ENCODE measurements at regions of chr1 and their contacts with region 1.

Region 1: DNA sequence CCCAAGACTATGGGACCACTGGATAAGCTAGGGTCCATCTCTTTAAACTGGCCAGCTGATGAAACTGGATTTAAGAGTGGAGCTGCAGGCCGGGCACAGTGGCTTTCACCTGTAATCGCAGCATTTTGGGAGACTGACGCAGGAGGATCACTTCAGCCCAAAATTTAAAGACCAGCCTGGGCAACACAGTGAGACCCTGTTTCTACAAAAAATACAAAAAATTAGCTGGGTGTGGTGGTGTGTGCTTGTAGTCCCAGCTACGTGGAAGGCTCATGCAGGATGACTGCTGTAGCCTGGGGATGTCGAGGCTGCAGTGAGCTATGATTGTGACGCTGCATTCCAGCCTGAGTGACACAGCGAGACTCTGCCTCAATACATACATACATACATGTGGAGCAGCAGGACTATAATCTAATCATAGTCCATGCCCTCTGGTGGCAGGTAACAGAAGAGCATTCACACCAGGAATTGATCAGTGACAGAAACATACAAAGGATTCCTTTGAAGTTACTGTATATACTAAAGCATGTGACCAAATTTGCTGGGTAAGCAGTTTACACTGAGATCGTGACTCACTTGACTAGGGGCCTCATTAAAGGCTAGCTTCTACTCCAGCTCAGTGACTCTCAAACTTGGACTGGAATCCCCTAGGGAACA is 101.5 kb upstream of the SLFNL1 start:
- DNase-seq: peak; percentile 72
- H3K4me3 ChIP-seq: no peak overlapping the region
- CTCF ChIP-seq: peak; percentile 63

Region 2: DNA sequence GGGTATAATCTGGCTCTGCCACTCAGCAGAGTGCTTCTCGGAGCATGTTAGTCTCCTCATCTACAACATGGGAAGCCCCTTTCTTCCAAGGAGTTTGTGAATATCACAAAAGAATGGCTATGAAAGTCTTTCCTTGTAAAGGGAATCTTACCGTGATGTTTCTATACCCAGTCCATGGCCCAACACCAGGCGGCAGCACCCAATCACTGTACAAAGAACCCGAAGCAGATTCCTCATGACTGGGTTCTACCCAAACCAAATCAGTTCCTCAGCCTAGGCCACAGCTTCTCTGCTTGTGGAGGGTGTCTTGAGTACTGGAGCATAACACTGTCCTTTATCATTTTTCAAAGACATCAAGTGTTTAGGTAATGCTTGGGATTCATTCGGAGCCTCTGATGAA is 84.9 kb before region 1 on chr1:
- CTCF ChIA-PET with region 1: interaction called, 10 read pairs
- POLR2A ChIA-PET with region 1: no interaction called
- DNase-seq: no peak
- H3K4me3 ChIP-seq: no peak overlapping the region
- CTCF ChIP-seq: no peak

Region 3: GRCh38 chr1:41103766-41104165 is 19.2 kb before region 1 on chr1:
- CTCF ChIA-PET with region 1: interaction called, 34 read pairs
- POLR2A ChIA-PET with region 1: interaction called, 3 read pairs
- DNase-seq: no peak
- H3K4me3 ChIP-seq: no peak overlapping the region
- CTCF ChIP-seq: no peak

Region 4: DNA sequence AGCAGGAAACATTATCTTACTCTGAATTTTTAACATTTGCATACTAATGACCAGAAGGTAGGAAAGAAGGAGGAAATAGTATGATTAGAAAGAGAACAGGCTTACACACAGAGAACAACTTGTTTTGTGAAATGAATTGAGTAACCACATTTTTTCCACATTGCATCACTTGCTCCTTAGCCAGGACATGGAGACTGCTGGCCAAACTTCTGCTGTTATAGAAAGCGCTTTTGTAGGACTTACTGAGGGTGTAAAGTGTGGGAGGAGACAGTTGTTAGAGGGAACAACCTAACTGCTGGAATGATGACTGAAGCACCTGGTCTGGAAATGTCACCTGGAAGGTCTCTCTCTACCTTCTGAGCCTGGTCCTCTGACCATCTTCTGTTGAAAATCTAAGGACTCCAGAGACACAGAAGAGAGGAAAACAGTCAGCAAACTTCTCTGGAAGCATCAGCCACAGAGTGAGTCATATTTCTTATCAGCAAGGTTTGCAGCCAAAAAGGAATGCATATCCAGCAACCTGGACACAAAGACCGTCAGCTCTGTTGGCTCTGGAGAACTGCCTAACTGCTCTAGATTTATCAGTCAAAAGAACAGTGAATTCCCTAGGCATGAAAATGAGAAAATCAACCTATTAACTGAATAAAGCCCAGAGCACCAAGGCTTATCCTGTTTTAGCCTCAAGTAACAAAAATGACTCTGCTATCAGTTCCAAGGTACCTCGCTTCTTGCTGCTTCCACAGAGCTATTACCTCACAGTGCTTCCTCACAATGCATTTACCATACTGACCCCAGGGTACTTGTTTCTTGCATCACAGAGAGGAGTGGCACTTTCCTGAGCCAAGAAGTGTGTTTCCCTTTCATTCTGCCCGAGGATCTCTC is 13.4 kb before region 1 on chr1:
- CTCF ChIA-PET with region 1: interaction called, 34 read pairs
- POLR2A ChIA-PET with region 1: interaction called, 3 read pairs
- DNase-seq: peak; percentile 67
- H3K4me3 ChIP-seq: peak overlapping the region; percentile 28; the same call in 1 of the 2 replicates
- CTCF ChIP-seq: no peak

Region 5: DNA sequence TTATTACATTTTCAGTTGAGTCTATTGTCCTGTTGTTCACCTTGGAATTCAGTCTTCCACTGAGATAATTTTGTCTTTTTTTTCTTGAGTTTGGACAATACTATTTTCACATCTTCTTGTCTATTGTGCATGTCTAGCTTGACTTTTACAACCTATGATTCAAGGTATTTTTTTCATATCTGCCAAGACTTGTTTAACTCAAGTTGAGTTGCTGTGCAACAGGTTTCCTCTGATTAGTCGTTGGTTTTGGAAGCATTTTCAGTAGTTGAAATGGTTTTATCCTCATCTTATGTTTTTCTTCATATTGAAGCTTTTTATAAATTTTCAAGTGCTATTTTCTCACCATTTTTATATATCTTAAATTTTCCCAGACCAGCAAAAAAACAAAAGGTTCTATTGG is 15.6 kb after region 1 on chr1:
- CTCF ChIA-PET with region 1: interaction called, 13 read pairs
- POLR2A ChIA-PET with region 1: no interaction called
- DNase-seq: no peak
- H3K4me3 ChIP-seq: no peak overlapping the region
- CTCF ChIP-seq: no peak

Region 6: DNA sequence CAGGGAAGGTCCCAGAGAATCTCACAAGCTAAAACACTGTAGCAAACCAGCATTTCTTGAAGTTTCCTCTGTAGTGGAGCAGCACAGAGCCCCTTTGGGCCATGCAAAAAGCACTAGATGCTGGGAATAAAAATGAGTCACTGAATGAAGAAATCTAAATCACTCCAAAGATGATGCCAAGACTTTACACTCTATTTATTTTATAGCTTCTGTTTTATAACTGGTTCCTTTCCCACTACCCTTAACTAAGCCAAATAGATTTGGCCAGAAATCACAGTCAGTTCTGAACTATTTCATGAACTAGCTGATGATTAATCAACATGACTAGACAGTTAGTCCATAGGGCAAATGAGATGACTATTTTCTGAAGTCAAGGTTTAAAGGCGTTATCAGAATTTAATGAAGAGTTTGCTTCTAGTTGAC is 29.7 kb after region 1 on chr1:
- CTCF ChIA-PET with region 1: interaction called, 11 read pairs
- POLR2A ChIA-PET with region 1: no interaction called
- DNase-seq: peak; percentile 84
- H3K4me3 ChIP-seq: no peak overlapping the region
- CTCF ChIP-seq: no peak